Posterior cingulate gyrus (tissue), 11 donors: ENCODE measurements at regions of chr2 and their contacts with region 1.

Region 1: GRCh38 chr2:74482801-74483674 is at the starts of genes CCDC142 and TTC31:
- DNase-seq: peak; percentile 90 to 99 (median 94)

Region 2: GRCh38 chr2:74587664-74588277 is 104.7 kb after region 1 on chr2:
- intact Hi-C with region 1: loop called (anchors 1 kb)
- DNase-seq: peak in 6 of 10 donors; percentile 22 to 91 (median 52)

Region 3: DNA sequence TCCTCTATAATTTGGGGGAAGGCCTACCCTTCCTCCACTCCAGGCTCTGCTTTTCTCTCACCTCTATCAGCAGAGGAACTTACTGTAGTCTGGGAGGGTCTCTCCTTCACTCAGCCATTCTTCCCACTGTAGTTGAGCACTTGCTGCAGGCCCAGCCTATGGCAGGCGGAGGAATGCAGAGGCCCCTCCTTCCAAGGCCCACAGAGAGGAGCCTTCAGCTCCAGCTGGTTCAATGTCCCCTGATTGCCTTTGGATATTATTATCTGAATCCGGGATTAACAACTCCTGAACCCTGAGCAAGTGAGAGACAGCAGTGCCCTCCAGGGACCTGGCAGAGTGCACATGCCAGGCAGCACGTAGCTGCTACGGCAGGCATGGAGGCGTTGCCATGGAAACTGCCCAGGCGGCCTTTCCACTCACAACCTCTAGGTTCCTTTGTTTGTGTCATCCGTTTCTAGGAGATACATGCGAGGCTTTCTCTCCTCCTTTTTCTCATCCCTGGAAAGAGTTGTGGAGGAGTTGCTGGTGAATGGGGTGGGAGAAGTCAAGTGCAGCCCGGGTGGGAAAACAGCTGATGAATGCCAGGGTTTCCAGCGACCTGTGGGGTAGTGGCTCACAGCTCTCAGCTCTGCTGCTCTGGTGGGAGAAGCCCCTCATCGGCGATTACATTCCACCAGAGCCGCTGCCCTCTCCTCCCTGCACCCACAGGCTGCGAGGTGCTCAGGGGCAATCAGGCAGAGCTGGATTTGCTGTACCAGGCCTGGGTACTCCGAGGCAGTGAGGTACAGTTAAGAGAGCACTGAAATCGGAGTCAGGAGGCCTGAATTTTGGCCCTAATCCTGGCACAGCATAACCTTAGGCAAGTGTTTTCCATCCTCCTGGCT is 295.6 kb after region 1 on chr2:
- intact Hi-C with region 1: no loop called
- DNase-seq: peak in 1 of 10 donors; percentile 70